Heart right ventricle (tissue), 16 donors: ENCODE measurements at regions of chr18 and their contacts with region 1.

Region 1: DNA sequence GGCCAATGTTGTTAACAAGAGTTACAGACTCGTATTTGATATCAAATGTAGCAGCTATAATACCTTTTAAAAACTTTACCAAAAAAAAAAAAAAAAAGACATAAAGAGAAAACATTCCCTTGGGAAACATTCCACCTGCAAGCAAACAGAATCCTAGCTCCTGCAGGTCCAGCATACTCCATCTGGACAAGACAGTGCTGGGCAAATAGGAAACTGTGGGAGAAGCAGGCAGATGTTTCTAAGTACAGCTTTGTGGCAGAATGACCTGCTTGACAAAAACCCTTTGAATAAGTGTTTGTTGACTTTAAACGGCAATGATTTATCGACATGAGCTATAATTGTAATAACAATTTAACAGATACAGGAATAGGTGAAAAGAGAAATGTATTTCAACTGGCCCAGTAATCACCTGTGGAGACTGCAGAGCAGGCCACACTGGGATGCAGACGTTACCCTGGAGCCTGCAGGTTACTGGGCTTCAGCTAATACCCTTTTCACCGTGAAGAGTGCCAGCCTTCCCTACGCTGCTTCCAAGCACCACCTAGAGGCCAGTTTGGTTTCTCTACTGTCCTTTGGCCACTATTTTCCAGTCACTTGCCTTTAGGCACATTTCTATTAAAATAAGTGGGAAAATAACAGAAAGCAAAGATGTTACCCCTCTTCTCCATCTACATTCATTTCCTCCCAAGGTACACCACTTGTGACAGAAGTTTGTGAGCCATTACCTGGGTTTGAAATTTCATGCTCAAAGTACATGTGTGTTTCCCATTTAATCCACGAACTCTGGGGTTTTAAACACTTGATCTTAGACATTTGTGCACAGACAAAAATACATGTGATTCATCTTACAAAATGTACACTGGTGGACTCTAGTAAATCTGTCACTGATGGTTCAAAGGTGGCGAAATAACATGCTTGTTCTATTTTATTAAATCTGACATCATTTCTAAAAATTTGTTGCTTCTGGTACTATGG is 96.9 kb upstream of the ZNF397 start:
- DNase-seq: peak in 1 of 2 donors; percentile 62
- ATAC-seq: peak; percentile 85 to 98 (median 91)
- H3K4me3 ChIP-seq: no peak overlapping the region
- H3K27ac ChIP-seq: peak overlapping the region in 2 of 10 donors; percentile 19 to 33
- H3K4me1 ChIP-seq: peaks cover 0 to 30% (median 3%) of the 10 kb centered on the region in 9 donors
- H3K27me3 ChIP-seq: no peaks in the 10 kb centered on the region
- CTCF ChIP-seq: peak; percentile 70 to 83 (median 79)

Region 2: GRCh38 chr18:34867520-34867919 is 276.4 kb before region 1 on chr18:
- intact Hi-C with region 1: loop called in 2 of 10 experiments (anchors 10 kb)
- DNase-seq: peak; percentile 16 to 41
- ATAC-seq: peak; percentile 48 to 86 (median 70)
- H3K4me3 ChIP-seq: no peak overlapping the region
- H3K27ac ChIP-seq: peak overlapping the region in 8 of 10 donors; percentile 20 to 59 (median 34)
- H3K4me1 ChIP-seq: peaks cover 0 to 30% (median 10%) of the 10 kb centered on the region in 9 donors
- H3K27me3 ChIP-seq: no peaks in the 10 kb centered on the region
- CTCF ChIP-seq: peak in 7 of 9 donors; percentile 13 to 45 (median 35)

Region 3: GRCh38 chr18:34880882-34881834 is 262.8 kb before region 1 on chr18:
- intact Hi-C with region 1: loop called in 2 of 10 experiments (anchors 10 kb)
- DNase-seq: no peak
- ATAC-seq: peak in 7 of 8 donors; percentile 75 to 93 (median 86)
- H3K4me3 ChIP-seq: no peak overlapping the region
- H3K27ac ChIP-seq: peak overlapping the region; percentile 17 to 81 (median 66)
- H3K4me1 ChIP-seq: peaks cover 0 to 25% (median 11%) of the 10 kb centered on the region in 9 donors
- H3K27me3 ChIP-seq: no peaks in the 10 kb centered on the region
- CTCF ChIP-seq: peak in 6 of 9 donors; percentile 9 to 52 (median 32)

Region 4: DNA sequence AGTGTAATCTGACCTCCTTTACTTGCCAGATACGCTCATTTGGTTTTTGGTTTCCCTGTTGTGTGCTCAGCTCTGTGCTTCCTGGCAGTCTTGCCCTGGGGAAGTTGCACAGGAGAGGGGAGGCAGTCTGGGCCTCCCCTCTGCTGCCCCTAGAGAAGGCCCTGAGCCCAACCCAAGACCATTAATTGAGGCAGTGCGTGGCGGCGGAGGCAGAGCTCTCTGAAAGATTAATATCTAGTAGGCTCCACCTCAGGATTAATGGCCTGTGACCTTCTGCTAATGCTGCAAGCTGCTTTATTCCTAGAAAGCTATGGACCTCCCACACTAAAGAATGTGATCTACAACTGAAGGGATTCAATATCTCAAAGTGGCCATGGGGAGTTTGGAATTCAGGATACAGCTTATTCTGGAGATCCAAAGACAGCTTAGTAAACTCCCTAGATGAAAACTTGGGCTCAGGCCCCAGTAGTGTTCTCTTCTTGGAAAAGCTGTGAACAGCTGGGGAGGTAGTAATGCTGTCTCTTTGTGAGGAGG is 144.1 kb before region 1 on chr18:
- intact Hi-C with region 1: loop called in 6 of 10 experiments (anchors 5 kb)
- DNase-seq: no peak
- ATAC-seq: peak in 6 of 8 donors; percentile 38 to 66 (median 54)
- H3K4me3 ChIP-seq: no peak overlapping the region
- H3K27ac ChIP-seq: no peak overlapping the region
- H3K4me1 ChIP-seq: peaks cover 0 to 4% (median 0%) of the 10 kb centered on the region in 9 donors
- H3K27me3 ChIP-seq: no peaks in the 10 kb centered on the region
- CTCF ChIP-seq: no peak

Region 5: GRCh38 chr18:35005963-35006577 is 137.8 kb before region 1 on chr18:
- intact Hi-C with region 1: loop called (anchors 1 to 5 kb)
- DNase-seq: peak in 1 of 2 donors; percentile 28
- ATAC-seq: peak; percentile 80 to 92 (median 88)
- H3K4me3 ChIP-seq: no peak overlapping the region
- H3K27ac ChIP-seq: no peak overlapping the region
- H3K4me1 ChIP-seq: peaks cover 0 to 6% (median 0%) of the 10 kb centered on the region in 9 donors
- H3K27me3 ChIP-seq: no peaks in the 10 kb centered on the region
- CTCF ChIP-seq: peak; percentile 45 to 86 (median 75)

Region 6: GRCh38 chr18:35029770-35030169 is 114.1 kb before region 1 on chr18:
- intact Hi-C with region 1: loop called in 5 of 10 experiments (anchors 5 kb)
- DNase-seq: no peak
- ATAC-seq: peak in 4 of 8 donors; percentile 39 to 56 (median 50)
- H3K4me3 ChIP-seq: peak overlapping the region in 9 of 10 donors; percentile 4 to 50 (median 36)
- H3K27ac ChIP-seq: peak overlapping the region in 9 of 10 donors; percentile 3 to 92 (median 42)
- H3K4me1 ChIP-seq: peaks cover 8 to 45% (median 30%) of the 10 kb centered on the region in 9 donors
- H3K27me3 ChIP-seq: no peaks in the 10 kb centered on the region
- CTCF ChIP-seq: peak in 4 of 9 donors; percentile 15 to 36 (median 28)

Region 7: GRCh38 chr18:35085450-35086380 is 58.2 kb before region 1 on chr18:
- intact Hi-C with region 1: loop called in 2 of 10 experiments (anchors 5 kb)
- DNase-seq: peak in 1 of 2 donors; percentile 26
- ATAC-seq: peak in 5 of 8 donors; percentile 72 to 85 (median 78)
- H3K4me3 ChIP-seq: no peak overlapping the region
- H3K27ac ChIP-seq: peak overlapping the region in 9 of 10 donors; percentile 38 to 87 (median 79)
- H3K4me1 ChIP-seq: peaks cover 7 to 92% (median 70%) of the 10 kb centered on the region in 9 donors
- H3K27me3 ChIP-seq: no peaks in the 10 kb centered on the region
- CTCF ChIP-seq: peak in 1 of 9 donors; percentile 11

Region 8: DNA sequence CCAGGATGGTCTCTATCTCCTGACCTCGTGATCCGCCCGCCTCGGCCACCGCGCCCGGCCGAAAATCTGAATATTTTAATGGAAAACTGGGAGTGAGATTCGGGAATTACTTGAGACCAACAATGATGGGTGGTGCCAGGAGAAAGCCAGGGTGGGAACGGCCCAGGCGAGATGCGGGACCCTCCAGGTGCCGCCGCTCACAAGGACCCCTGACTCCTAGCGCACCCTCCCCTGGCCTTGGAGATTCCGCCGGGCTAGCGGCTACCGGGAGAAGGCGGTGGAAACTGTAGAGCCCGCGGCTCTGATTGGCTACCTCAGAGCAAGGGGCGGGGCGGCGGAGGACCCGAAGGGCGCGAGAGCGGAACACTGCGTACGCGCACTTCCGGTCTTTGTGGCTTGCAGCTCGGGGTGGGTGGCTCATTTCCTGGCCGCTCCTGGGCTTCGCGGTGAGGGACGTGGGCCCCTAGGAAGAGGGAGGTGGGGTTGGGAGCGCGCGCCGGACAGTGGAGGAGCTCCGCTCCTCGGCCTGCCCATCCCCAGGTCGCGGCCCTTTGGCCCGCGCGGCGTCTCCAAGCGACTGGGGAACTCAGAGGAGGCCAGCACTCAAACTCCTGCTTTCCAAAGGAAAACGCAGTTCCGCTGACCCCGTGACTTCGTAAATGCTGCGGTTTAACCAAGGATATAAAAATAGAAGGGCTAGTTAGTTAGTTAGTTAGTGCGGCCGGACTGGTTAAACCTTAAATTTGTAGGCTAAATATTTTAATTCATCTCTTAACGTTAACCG is 96.9 kb after region 1 on chr18 and contains the start of gene ZNF397:
- intact Hi-C with region 1: no loop called
- DNase-seq: peak; percentile 98 to 99
- ATAC-seq: peak; percentile 100
- H3K4me3 ChIP-seq: peak within 1 kb of the TSS; percentile 54 to 92 (median 74)
- H3K27ac ChIP-seq: peak within 1 kb of the TSS; percentile 93 to 99 (median 98)
- H3K4me1 ChIP-seq: peaks cover 0 to 21% (median 13%) of the 10 kb centered on the region in 9 donors
- H3K27me3 ChIP-seq: no peaks in the 10 kb centered on the region
- CTCF ChIP-seq: peak in 2 of 9 donors; percentile 4 to 19
- total RNA-seq, gene ZNF397: 12.7 to 18.6 (median 14.6) TPM